ENCODE measurements at regions of chr12 and their contacts with region 1.

Region 1: GRCh38 chr12:130838951-130839769 is at the start of gene STX2:
- DNase-seq: peak; percentile 88
- ATAC-seq: peak; percentile 86
- H3K4me3 Mint-ChIP-seq: peak within 1 kb of the TSS; percentile 81
- H3K27ac Mint-ChIP-seq: peak within 1 kb of the TSS; percentile 71
- H3K4me1 Mint-ChIP-seq: peaks cover 34% of the 10 kb centered on the region
- H3K27me3 Mint-ChIP-seq: no peaks in the 10 kb centered on the region
- total RNA-seq, gene STX2: 24.5 to 24.9 TPM

Region 2: GRCh38 chr12:130768120-130768519 is 71.0 kb before region 1 on chr12:
- CTCF ChIA-PET with region 1: no interaction called
- POLR2A ChIA-PET with region 1: no interaction called
- DNase-seq: no peak
- ATAC-seq: no peak
- H3K4me3 Mint-ChIP-seq: no peak overlapping the region
- H3K27ac Mint-ChIP-seq: no peak overlapping the region
- H3K4me1 Mint-ChIP-seq: no peaks in the 10 kb centered on the region
- H3K27me3 Mint-ChIP-seq: peaks cover 14% of the 10 kb centered on the region

Region 3: DNA sequence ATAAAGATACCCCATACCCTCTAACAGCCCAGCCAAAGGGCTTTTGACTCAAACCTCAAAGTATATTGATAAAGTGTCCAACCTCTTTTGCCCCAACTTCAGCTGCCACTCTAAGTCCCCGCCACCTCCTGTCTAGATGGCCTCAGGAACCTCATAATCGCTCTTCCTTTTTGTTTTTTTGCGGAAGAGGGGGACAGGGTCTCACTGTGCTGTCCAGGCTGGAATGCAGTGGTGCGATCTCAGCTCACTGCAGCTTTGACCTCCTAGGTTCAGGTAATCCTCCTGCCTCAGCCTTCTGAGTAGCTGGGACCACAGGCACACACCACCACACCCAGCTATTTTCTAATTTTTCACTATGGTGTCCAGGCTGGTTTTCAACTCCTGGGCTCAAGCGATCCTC is 60.4 kb before region 1 on chr12:
- CTCF ChIA-PET with region 1: no interaction called
- POLR2A ChIA-PET with region 1: no interaction called
- DNase-seq: no peak
- ATAC-seq: no peak
- H3K4me3 Mint-ChIP-seq: no peak overlapping the region
- H3K27ac Mint-ChIP-seq: no peak overlapping the region
- H3K4me1 Mint-ChIP-seq: peaks cover 10% of the 10 kb centered on the region
- H3K27me3 Mint-ChIP-seq: peaks cover 19% of the 10 kb centered on the region

Region 4: GRCh38 chr12:130826149-130826801 is 12.9 kb before region 1 on chr12:
- CTCF ChIA-PET with region 1: interaction called, 45 read pairs
- POLR2A ChIA-PET with region 1: no interaction called
- DNase-seq: peak; percentile 79
- ATAC-seq: peak; percentile 95
- H3K4me3 Mint-ChIP-seq: no peak overlapping the region
- H3K27ac Mint-ChIP-seq: peak overlapping the region; percentile 76
- H3K4me1 Mint-ChIP-seq: peaks cover 27% of the 10 kb centered on the region
- H3K27me3 Mint-ChIP-seq: no peaks in the 10 kb centered on the region

Region 5: DNA sequence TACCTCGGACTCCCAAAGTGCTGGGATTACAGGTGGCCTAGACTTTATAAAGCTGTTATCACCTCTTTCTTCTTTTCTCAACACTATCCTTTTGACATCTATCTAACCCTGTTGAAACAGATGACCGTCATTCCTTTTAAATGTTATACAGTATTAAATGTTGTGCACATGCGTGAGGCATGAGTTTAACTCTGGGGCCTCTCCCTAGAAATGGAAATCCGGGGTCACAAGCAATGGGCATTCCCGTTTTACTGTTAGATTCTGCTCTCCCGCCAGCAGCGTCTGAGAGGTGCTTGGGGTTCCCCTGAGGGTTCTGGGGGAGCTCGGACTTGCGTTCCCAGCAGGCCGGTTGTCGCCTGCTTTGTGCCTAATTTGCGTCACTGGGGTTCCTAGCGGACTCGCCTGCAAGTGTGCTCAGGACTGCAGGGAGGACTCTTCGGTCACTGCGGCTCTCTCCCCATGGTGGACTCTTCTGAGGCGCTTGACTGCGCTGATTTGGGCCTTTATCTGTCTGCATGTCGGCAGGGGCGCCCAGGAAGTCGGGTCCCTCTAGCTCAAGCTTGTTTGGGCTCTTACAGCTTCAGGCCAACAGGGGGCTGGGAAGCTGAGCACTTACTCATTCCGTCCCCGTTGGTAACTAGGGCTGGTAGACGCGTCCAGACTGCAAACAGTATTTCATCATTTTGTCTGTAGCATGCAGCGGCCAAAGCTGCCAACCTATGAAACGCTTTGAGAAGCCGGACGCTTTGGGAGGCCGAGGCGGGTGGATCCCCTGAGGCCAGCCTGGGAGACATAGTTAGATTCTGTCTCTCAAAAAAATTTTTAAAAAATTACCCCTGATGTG is 31.5 kb after region 1 on chr12:
- CTCF ChIA-PET with region 1: interaction called, 13 read pairs
- POLR2A ChIA-PET with region 1: interaction called, 4 read pairs
- DNase-seq: peak; percentile 85
- ATAC-seq: peak; percentile 61
- H3K4me3 Mint-ChIP-seq: peak overlapping the region; percentile 85
- H3K27ac Mint-ChIP-seq: peak overlapping the region; percentile 96
- H3K4me1 Mint-ChIP-seq: peaks cover 43% of the 10 kb centered on the region
- H3K27me3 Mint-ChIP-seq: no peaks in the 10 kb centered on the region

Measured in activated CD8-positive, alpha-beta T cell treated with anti-CD3 and anti-CD28 coated beads, Interleukin-2, amount 10 ng/mL, durations not matched to agents 7 days and 5 days (primary cell).